ENCODE measurements at regions of chr1 and their contacts with region 1.

Region 1: DNA sequence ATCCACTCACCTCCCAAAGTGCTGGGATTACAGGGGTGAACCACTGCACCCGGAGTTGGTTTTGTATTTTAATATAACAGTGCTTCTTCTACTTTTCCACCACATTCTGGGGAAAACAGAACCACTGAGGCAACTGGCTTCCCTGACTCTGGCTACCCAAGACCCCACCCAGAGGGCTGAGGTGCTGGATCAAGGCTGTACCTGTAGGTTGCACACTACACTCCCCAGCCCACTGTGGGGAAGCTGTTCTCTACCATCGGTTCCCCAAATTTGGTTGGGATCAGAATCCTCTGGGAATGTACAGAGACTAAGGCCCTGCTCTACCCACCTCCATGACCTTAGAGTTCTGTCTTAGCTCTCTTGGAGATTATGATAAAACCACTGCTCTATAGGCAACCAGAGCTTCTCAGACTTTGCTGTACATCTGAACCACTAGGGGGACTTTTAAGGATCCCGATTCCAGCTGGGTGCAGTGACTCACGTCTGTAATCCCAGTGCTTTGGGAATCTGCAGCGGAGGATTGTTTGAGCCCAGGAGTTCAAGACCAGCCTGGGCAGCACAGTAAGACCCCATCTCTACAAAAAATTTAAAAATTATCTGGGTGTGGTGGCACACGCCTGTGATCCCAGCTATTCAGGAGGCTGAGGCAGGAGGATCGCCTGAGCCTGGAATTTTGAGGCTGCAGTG is 51.6 kb downstream of the GNG4 start:
- DNase-seq: no peak
- ATAC-seq: peak; percentile 88
- H3K4me3 ChIP-seq: no peak overlapping the region
- H3K27ac ChIP-seq: no peak overlapping the region
- H3K4me1 ChIP-seq: no peaks in the 10 kb centered on the region
- H3K27me3 ChIP-seq: no peaks in the 10 kb centered on the region
- CTCF ChIP-seq: peak; percentile 38

Region 2: GRCh38 chr1:235513495-235514366 is 84.3 kb before region 1 on chr1:
- CTCF ChIA-PET with region 1: interaction called, 11 read pairs
- POLR2A ChIA-PET with region 1: no interaction called
- in situ Hi-C with region 1: no loop called
- intact Hi-C with region 1: loop called (anchors 5 kb)
- DNase-seq: no peak
- ATAC-seq: peak; percentile 74
- H3K4me3 ChIP-seq: no peak overlapping the region
- H3K27ac ChIP-seq: no peak overlapping the region
- H3K4me1 ChIP-seq: no peaks in the 10 kb centered on the region
- H3K27me3 ChIP-seq: no peaks in the 10 kb centered on the region
- CTCF ChIP-seq: peak; percentile 89

Region 3: GRCh38 chr1:235791532-235792060 is 193.6 kb after region 1 on chr1:
- CTCF ChIA-PET with region 1: no interaction called
- POLR2A ChIA-PET with region 1: no interaction called
- in situ Hi-C with region 1: no loop called
- intact Hi-C with region 1: no loop called
- DNase-seq: no peak
- ATAC-seq: no peak
- H3K4me3 ChIP-seq: no peak overlapping the region
- H3K27ac ChIP-seq: no peak overlapping the region
- H3K4me1 ChIP-seq: no peaks in the 10 kb centered on the region
- H3K27me3 ChIP-seq: no peaks in the 10 kb centered on the region
- CTCF ChIP-seq: no peak

Region 4: DNA sequence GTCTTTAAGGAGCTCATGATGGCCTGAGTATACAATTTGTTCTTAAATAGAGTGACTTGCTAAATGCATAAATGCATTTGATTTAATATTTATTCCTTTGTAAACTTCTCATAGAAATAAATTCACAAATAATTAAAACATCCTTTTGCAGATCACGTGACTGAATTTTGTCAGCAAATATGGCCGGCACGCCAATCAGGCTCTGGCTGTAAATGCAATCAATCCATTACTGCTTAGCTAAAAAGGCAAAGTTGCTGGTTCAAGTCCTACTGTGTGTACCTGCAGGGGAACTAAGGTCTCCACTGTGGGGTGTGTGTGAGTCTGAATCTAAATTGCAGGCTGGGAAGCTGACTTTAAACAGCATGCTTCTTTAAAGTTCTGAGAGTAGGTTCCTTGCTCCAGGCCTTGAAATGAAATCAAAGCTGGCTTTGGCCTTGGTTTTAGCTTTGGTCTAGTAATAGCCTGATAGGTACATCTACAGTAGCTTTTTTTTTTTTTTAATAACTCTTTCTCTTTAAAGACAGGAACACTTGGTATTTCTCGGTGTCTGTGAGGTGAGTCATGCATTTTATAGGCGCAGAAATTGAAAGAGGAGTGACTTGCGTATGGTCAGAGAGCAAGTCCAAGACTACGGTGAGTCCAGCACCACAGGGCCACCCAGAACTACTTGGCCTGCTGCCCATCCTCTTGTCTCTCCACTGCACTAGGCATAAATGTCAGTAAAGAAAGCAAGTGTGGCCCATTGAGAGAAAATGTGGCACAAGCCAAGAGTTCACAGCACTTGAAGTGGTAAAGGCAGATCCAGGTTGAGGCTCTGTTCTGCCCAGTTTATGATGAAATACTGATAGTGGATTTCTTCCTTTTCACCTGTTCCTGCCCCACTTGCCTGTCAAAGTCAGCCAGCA is 304.9 kb after region 1 on chr1:
- CTCF ChIA-PET with region 1: interaction called, 10 read pairs
- POLR2A ChIA-PET with region 1: no interaction called
- in situ Hi-C with region 1: no loop called
- intact Hi-C with region 1: no loop called
- DNase-seq: peak; percentile 86
- ATAC-seq: peak; percentile 92
- H3K4me3 ChIP-seq: peak overlapping the region in 1 of 2 experiments; percentile 17; a peak in 1 of 4 replicates
- H3K27ac ChIP-seq: peak overlapping the region; percentile 99
- H3K4me1 ChIP-seq: peaks cover 53% of the 10 kb centered on the region
- H3K27me3 ChIP-seq: no peaks in the 10 kb centered on the region
- CTCF ChIP-seq: no peak

Measured in Panc1 (cell line).